Prostate gland (tissue), 2 donors: ENCODE measurements at regions of chr2 and their contacts with region 1.

Region 1: GRCh38 chr2:179422037-179422643 is 157.5 kb upstream of the SESTD1 start:
- DNase-seq: peak; percentile 76
- H3K4me3 ChIP-seq: no peak overlapping the region
- H3K27ac ChIP-seq: no peak overlapping the region
- H3K4me1 ChIP-seq: no peaks in the 10 kb centered on the region
- H3K27me3 ChIP-seq: no peaks in the 10 kb centered on the region
- CTCF ChIP-seq: peak in 3 of 4 experiments; percentile 67 to 82 (median 70)
- POLR2A ChIP-seq: no peak

Region 2: GRCh38 chr2:179751163-179751809 is 329.1 kb after region 1 on chr2:
- intact Hi-C with region 1: loop called (anchors 1 kb)
- DNase-seq: no peak
- H3K4me3 ChIP-seq: no peak overlapping the region
- H3K27ac ChIP-seq: no peak overlapping the region
- H3K4me1 ChIP-seq: no peaks in the 10 kb centered on the region
- H3K27me3 ChIP-seq: no peaks in the 10 kb centered on the region
- CTCF ChIP-seq: peak; percentile 39 to 79 (median 67)
- POLR2A ChIP-seq: no peak